G401 (cell line): ENCODE measurements at regions of chr17 and their contacts with region 1.

Region 1: DNA sequence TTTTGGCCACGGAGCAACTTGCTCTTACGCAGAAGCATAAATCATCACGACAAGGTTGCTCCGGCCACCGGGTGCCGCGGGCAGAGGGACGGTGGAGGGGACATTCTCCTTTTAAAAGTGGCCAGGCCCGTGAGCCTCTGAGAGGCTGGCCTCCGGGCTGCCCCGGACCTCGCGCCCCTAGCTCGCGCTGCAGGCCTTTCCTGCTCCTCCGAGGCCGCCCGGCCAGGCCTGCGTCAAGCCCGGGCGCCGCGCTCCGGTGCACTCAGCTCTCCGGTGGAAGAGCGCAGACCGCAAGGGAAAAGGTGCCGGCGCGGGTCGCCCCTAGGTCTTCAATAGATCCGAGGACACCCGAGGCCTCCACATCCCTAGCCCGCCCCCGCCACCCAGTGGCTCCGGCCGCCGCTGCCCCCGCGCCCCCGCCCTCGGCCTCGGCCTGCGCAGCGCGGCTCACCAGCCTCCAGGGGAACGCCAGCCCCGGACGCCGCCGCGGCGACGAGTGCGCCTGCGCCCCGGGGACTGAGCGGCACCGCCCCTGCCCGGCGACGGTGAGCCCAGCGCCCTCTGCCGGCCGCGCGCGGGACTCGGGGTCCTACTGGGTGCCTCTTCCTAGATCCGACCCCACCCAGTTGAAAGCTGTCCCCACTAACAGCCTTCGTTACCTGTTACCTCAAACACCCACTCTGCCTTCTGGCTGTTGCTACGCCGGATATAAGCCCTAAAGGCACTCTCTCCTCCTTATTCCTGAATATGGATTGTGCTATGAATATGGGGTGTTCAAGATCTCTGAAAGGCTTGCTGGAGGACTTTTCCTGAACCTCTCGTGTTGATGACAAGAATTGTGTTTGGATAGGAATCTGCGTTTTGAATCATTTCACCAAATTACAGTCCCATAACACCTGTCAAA is at the start of gene LYRM9:
- DNase-seq: peak; percentile 85
- total RNA-seq, gene LYRM9: 5.9 and 8.2 TPM in 2 replicates

Region 2: GRCh38 chr17:27793168-27793905 is 99.8 kb before region 1 on chr17:
- in situ Hi-C with region 1: loop called (anchors 25 kb)
- DNase-seq: peak; percentile 21

Region 3: DNA sequence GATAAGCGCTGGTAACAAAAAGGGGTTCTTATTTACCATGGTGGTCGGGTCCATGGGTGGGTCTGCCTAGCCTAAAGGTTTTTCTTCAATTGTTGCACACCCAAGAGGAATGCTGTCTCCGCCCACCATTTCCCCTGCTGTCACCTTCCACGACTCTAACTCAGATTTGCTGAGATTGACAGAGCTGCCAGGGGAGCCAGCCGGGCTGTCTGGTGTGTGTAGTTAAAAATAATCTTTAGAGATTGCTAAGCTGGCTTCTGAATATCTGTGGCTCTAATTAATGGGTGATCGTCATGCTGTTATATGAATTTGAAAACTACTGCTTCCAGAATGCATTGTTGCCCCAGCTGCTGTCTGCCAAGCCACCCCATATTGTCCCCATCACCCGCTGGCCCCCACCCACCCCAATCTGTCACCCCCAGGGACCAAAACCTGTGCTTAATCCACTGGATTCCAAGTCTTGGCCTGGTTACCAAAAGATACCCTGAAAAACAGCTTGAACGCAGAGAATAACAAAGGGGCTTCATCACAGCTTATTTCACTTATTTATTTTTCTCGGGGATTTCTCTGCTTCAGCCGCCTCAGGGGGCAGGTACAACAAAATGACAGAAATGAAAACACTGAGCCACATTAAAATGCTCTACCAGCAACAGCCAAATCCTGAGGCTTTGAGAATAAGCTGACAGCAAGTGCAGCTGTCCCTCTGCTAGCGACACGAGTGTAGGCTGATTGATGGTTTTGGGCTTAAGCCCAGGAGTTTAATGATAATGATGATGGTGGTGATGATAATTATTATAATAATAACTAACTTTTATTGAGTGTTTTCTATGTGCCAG is 103.3 kb after region 1 on chr17:
- in situ Hi-C with region 1: no loop called
- DNase-seq: no peak